PC-9 (cell line): ENCODE measurements at regions of chr5 and their contacts with region 1.

Region 1: GRCh38 chr5:42461507-42461906 is 38.3 kb downstream of the GHR start:
- DNase-seq: no peak
- H3K4me3 ChIP-seq: no peak overlapping the region
- H3K27ac ChIP-seq: no peak overlapping the region
- H3K4me1 ChIP-seq: no peaks in the 10 kb centered on the region
- H3K27me3 ChIP-seq: peaks cover 11% of the 10 kb centered on the region
- CTCF ChIP-seq: no peak

Region 2: DNA sequence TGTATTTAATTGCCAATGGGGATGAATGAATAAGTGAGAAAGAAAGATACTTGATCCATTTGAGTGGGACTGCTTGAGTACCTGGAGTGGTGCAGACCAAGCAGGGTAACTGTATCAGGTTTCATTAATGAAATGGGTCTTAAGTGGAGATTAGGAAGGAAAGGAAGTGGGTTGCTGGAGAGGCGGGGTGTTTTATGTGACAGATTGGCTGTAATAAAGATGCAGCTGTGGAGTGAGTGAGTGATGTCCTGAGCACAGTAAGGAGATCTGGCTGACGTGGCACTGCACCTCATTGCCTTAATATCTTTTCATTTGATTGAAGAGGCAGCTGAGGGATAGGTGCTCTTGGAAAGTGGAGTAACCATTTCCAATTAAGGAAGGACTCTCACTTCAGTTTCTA is 134.1 kb after region 1 on chr5:
- CTCF ChIA-PET with region 1: no interaction called
- POLR2A ChIA-PET with region 1: no interaction called
- intact Hi-C with region 1: no loop called
- DNase-seq: no peak
- H3K4me3 ChIP-seq: no peak overlapping the region
- H3K27ac ChIP-seq: no peak overlapping the region
- H3K4me1 ChIP-seq: no peaks in the 10 kb centered on the region
- H3K27me3 ChIP-seq: no peaks in the 10 kb centered on the region
- CTCF ChIP-seq: no peak

Region 3: GRCh38 chr5:42772265-42772993 is 310.9 kb after region 1 on chr5:
- CTCF ChIA-PET with region 1: no interaction called
- POLR2A ChIA-PET with region 1: no interaction called
- intact Hi-C with region 1: no loop called
- DNase-seq: peak; percentile 11 to 72
- H3K4me3 ChIP-seq: no peak overlapping the region; the same call in 1 of the 2 replicates
- H3K27ac ChIP-seq: no peak overlapping the region
- H3K4me1 ChIP-seq: peaks cover 5% of the 10 kb centered on the region; the same call in 1 of the 2 replicates
- H3K27me3 ChIP-seq: peaks cover 8% of the 10 kb centered on the region; the same call in 1 of the 2 replicates
- CTCF ChIP-seq: no peak

Region 4: DNA sequence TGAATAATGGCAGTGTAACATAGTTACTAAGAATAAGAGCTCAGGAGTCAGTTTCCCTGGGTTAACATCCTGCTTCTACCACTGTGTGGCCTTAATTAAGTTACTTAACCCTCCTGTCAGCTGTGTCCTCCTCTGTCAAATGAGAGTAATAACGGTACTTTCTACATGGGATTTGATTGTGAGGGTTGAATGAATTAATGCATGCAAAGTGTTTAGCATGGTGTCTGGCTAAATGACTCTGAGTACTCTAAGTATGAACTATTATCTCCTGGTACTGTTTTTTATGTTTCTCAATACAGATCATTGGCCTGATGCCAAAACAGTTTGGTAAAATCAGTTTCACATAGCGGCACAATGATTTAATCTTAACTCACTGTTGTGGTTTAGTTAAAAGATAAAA is 678.8 kb after region 1 on chr5:
- CTCF ChIA-PET with region 1: no interaction called
- POLR2A ChIA-PET with region 1: interaction called, 15 read pairs
- intact Hi-C with region 1: no loop called
- DNase-seq: no peak
- H3K4me3 ChIP-seq: no peak overlapping the region
- H3K27ac ChIP-seq: no peak overlapping the region
- H3K4me1 ChIP-seq: no peaks in the 10 kb centered on the region
- H3K27me3 ChIP-seq: no peaks in the 10 kb centered on the region
- CTCF ChIP-seq: no peak